ENCODE measurements at regions of chr14 and their contacts with region 1.

Region 1: GRCh38 chr14:79419571-79420327 is 791.6 kb downstream of the DIO2 start:
- DNase-seq: peak in 1 of 2 experiments; percentile 20
- H3K4me3 ChIP-seq: no peak overlapping the region
- H3K4me3 Mint-ChIP-seq: no peak overlapping the region
- H3K27ac Mint-ChIP-seq: no peak overlapping the region
- H3K4me1 ChIP-seq: peaks cover 27% of the 10 kb centered on the region
- H3K4me1 Mint-ChIP-seq: peaks cover 21% of the 10 kb centered on the region
- H3K27me3 ChIP-seq: no peaks in the 10 kb centered on the region
- H3K27me3 Mint-ChIP-seq: no peaks in the 10 kb centered on the region
- CTCF ChIP-seq: no peak

Region 2: DNA sequence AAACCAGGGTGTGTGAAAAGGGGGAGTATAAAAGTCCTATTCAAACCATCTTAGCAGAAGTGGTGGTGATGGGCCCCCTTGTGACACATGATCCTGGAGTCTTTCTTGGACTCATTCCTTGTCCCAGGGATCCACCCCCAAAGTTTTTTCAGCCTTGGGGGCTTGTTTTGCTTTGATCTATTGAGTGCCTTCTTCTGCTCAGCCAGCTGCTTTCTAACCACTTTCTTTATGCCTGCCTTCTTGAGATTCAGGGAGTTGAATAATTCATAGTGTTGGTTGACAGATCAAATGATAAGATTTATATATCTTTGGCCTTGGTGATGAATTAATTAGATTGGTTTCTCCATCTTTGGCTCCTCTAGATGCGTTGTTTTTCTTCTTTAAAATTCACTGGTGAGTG is 135.1 kb before region 1 on chr14:
- CTCF ChIA-PET with region 1: no interaction called
- POLR2A ChIA-PET with region 1: no interaction called
- intact Hi-C with region 1: loop called (anchors 5 kb)
- DNase-seq: no peak
- H3K4me3 ChIP-seq: no peak overlapping the region
- H3K4me3 Mint-ChIP-seq: no peak overlapping the region
- H3K27ac Mint-ChIP-seq: no peak overlapping the region
- H3K4me1 ChIP-seq: peaks cover 27% of the 10 kb centered on the region
- H3K4me1 Mint-ChIP-seq: peaks cover 46% of the 10 kb centered on the region
- H3K27me3 ChIP-seq: no peaks in the 10 kb centered on the region
- H3K27me3 Mint-ChIP-seq: peaks cover 4% of the 10 kb centered on the region
- CTCF ChIP-seq: no peak

Region 3: DNA sequence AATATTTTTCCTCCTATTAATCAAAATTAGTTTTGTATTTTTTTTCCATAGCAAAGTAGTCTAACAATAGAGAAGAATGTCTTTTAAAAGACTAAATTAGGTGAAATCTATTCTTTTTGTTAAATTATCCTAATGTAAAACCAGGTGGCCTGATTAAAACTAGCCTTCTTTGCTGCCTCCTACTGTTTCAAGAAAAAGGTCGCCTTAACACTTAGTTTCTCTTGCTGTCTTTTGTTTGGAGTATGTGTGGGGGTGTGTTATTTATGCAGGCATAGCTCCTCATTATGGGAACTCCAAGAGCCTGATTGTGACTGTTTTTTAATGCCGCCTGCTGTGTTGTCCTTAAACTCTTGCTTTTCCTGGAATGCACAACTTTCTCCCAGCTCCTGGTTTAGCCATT is 63.7 kb before region 1 on chr14:
- CTCF ChIA-PET with region 1: no interaction called
- POLR2A ChIA-PET with region 1: no interaction called
- intact Hi-C with region 1: loop called (anchors 2 kb)
- DNase-seq: no peak
- H3K4me3 ChIP-seq: no peak overlapping the region
- H3K4me3 Mint-ChIP-seq: no peak overlapping the region
- H3K27ac Mint-ChIP-seq: no peak overlapping the region
- H3K4me1 ChIP-seq: peaks cover 39% of the 10 kb centered on the region
- H3K4me1 Mint-ChIP-seq: peaks cover 26% of the 10 kb centered on the region
- H3K27me3 ChIP-seq: no peaks in the 10 kb centered on the region
- H3K27me3 Mint-ChIP-seq: no peaks in the 10 kb centered on the region
- CTCF ChIP-seq: peak in 1 of 2 experiments; percentile 8

Region 4: GRCh38 chr14:79404874-79405511 is 14.8 kb before region 1 on chr14:
- CTCF ChIA-PET with region 1: no interaction called
- POLR2A ChIA-PET with region 1: no interaction called
- intact Hi-C with region 1: no loop called
- DNase-seq: no peak
- H3K4me3 ChIP-seq: no peak overlapping the region
- H3K4me3 Mint-ChIP-seq: no peak overlapping the region
- H3K27ac Mint-ChIP-seq: no peak overlapping the region
- H3K4me1 ChIP-seq: no peaks in the 10 kb centered on the region
- H3K4me1 Mint-ChIP-seq: no peaks in the 10 kb centered on the region
- H3K27me3 ChIP-seq: no peaks in the 10 kb centered on the region
- H3K27me3 Mint-ChIP-seq: no peaks in the 10 kb centered on the region
- CTCF ChIP-seq: no peak

Region 5: GRCh38 chr14:79453276-79453675 is 33.5 kb after region 1 on chr14:
- CTCF ChIA-PET with region 1: no interaction called
- POLR2A ChIA-PET with region 1: no interaction called
- intact Hi-C with region 1: no loop called
- DNase-seq: no peak
- H3K4me3 ChIP-seq: no peak overlapping the region
- H3K4me3 Mint-ChIP-seq: no peak overlapping the region
- H3K27ac Mint-ChIP-seq: no peak overlapping the region
- H3K4me1 ChIP-seq: no peaks in the 10 kb centered on the region
- H3K4me1 Mint-ChIP-seq: peaks cover 2% of the 10 kb centered on the region
- H3K27me3 ChIP-seq: no peaks in the 10 kb centered on the region
- H3K27me3 Mint-ChIP-seq: no peaks in the 10 kb centered on the region
- CTCF ChIP-seq: no peak

Measured in Caco-2 (cell line).